OCI-LY7 (cell line): ENCODE measurements at regions of chr12 and their contacts with region 1.

Region 1: GRCh38 chr12:123580772-123581171 is 3.6 kb upstream of the TMED2 start:
- DNase-seq: no peak
- H3K4me3 ChIP-seq: no peak overlapping the region
- H3K27ac ChIP-seq: no peak overlapping the region
- H3K4me1 ChIP-seq: peaks cover 20% of the 10 kb centered on the region
- CTCF ChIP-seq: no peak

Region 2: GRCh38 chr12:123271001-123271729 is 309.6 kb before region 1 on chr12:
- CTCF ChIA-PET with region 1: no interaction called
- POLR2A ChIA-PET with region 1: no interaction called
- intact Hi-C with region 1: loop called (anchors 1 kb)
- DNase-seq: peak; percentile 83
- H3K4me3 ChIP-seq: peak overlapping the region; percentile 77
- H3K27ac ChIP-seq: no peak overlapping the region
- H3K4me1 ChIP-seq: peaks cover 21% of the 10 kb centered on the region
- CTCF ChIP-seq: no peak; the same call in 1 of the 2 replicates

Region 3: GRCh38 chr12:123388177-123388947 is 192.4 kb before region 1 on chr12:
- CTCF ChIA-PET with region 1: no interaction called
- POLR2A ChIA-PET with region 1: interaction called, 5 read pairs
- intact Hi-C with region 1: loop called (anchors 5 kb)
- DNase-seq: peak; percentile 83
- H3K4me3 ChIP-seq: peak overlapping the region; percentile 80
- H3K27ac ChIP-seq: peak overlapping the region; percentile 71
- H3K4me1 ChIP-seq: peaks cover 45% of the 10 kb centered on the region
- CTCF ChIP-seq: no peak

Region 4: GRCh38 chr12:123533672-123534643 is 46.8 kb before region 1 on chr12 and contains the start of gene RILPL1:
- CTCF ChIA-PET with region 1: no interaction called
- POLR2A ChIA-PET with region 1: interaction called, 4 read pairs
- intact Hi-C with region 1: loop called (anchors 5 kb)
- DNase-seq: peak; percentile 61
- H3K4me3 ChIP-seq: peak within 1 kb of the TSS; percentile 72
- H3K27ac ChIP-seq: no peak within 1 kb of the TSS
- H3K4me1 ChIP-seq: peaks cover 21% of the 10 kb centered on the region
- CTCF ChIP-seq: peak; percentile 42
- total RNA-seq, gene RILPL1: 0.05 and 0.38 TPM in 2 replicates

Region 5: GRCh38 chr12:123713398-123713797 is 132.6 kb after region 1 on chr12:
- CTCF ChIA-PET with region 1: no interaction called
- POLR2A ChIA-PET with region 1: interaction called, 4 read pairs
- intact Hi-C with region 1: loop called (anchors 5 kb)
- DNase-seq: peak; percentile 4
- H3K4me3 ChIP-seq: peak overlapping the region; percentile 87
- H3K27ac ChIP-seq: peak overlapping the region; percentile 33
- H3K4me1 ChIP-seq: peaks cover 25% of the 10 kb centered on the region
- CTCF ChIP-seq: no peak